ENCODE measurements at regions of chr9 and their contacts with region 1.

Region 1: DNA sequence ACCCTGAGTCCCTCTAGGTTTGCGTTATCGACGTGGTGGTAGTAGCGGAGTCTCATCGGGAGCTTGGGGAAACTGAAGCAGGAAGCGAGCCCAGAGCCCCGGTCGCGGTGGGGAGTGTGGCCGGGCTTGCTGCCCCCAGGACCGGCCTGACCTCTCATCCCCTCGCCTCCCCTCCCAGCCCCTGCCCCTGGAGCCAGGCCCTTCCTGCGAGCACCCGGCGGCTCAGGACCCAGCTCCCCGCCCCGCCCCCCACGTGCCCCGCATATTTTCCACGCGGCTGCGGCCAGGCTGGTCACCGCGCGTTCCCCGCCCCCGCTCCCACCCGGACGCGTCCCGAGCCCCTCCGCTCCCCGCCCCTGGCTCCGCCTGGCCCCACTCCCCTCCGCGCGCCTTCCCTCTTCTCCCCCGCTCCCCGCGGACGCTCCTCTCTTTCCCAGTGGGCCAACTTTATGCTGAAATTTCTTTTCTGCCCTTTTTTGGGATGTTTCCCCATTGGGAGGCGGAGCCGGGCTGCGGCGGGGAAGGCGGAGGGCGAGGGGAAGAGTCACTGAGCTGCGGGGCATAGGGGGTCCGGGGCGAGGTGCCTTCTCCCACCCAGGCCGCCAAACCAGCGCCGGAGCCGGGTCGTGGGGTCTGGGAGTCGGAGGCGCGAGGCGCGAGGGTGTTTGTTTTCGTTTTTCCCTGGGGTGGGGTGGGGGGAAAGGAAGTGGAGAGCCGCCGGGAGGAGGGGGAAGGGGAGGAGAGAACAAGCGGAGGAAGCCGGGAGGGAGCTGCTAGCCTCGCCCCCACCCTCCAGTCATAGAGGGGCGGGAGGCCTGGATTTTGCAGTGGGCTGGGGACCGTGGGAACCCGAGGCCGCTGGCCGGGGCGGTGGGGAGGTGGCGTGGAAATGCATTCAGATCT is 957 bp upstream of the TPM2 start:
- DNase-seq: peak; percentile 56
- H3K4me3 Mint-ChIP-seq: peak overlapping the region; percentile 75
- H3K27ac Mint-ChIP-seq: no peak overlapping the region
- H3K4me1 Mint-ChIP-seq: peaks cover 21% of the 10 kb centered on the region
- H3K27me3 Mint-ChIP-seq: no peaks in the 10 kb centered on the region

Region 2: DNA sequence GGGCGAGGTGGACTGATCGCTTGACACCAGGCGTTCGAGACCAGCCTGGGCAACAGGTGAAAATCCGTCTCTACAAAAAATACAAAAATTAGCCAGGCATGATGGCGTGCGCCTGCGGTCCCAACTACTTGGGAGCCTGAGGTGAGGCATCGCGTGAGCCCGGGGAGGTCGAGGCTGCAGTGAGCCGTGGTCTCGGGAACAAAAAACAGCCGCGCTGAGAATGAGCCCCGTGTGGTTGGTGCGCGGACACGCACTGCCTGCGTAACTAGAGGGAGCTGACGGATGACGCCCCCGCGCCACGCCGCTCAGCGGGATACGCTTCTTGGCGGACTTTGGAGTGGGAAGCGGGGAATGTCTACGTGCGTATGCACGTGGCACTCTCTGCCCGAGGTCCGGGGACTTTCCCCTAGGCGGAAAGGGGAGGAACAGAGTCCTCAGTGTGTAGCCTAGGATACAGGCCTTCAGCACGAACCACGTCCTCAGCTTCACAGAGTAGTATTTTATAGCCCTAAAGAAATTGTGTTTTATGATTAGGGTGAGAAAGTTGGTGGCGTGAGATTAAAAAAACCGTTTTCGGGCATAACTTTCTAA is 33.0 kb before region 1 on chr9 and contains the start of gene RMRP:
- CTCF ChIA-PET with region 1: interaction called, 28 read pairs
- POLR2A ChIA-PET with region 1: interaction called, 8 read pairs
- intact Hi-C with region 1: loop called (anchors 5 kb)
- DNase-seq: peak; percentile 96
- H3K4me3 Mint-ChIP-seq: peak within 1 kb of the TSS; percentile 86
- H3K27ac Mint-ChIP-seq: peak within 1 kb of the TSS; percentile 96
- H3K4me1 Mint-ChIP-seq: peaks cover 64% of the 10 kb centered on the region
- H3K27me3 Mint-ChIP-seq: peaks cover 2% of the 10 kb centered on the region
- total RNA-seq, gene RMRP: 10,694 to 13,592 TPM

Region 3: GRCh38 chr9:35664531-35665470 is 25.9 kb before region 1 on chr9 and contains the start of gene ARHGEF39:
- CTCF ChIA-PET with region 1: interaction called, 37 read pairs
- POLR2A ChIA-PET with region 1: no interaction called
- intact Hi-C with region 1: loop called (anchors 2 kb)
- DNase-seq: peak; percentile 89
- H3K4me3 Mint-ChIP-seq: peak within 1 kb of the TSS; percentile 84
- H3K27ac Mint-ChIP-seq: peak within 1 kb of the TSS; percentile 73
- H3K4me1 Mint-ChIP-seq: peaks cover 53% of the 10 kb centered on the region
- H3K27me3 Mint-ChIP-seq: no peaks in the 10 kb centered on the region
- total RNA-seq, gene ARHGEF39: 28.1 to 28.2 TPM

Region 4: DNA sequence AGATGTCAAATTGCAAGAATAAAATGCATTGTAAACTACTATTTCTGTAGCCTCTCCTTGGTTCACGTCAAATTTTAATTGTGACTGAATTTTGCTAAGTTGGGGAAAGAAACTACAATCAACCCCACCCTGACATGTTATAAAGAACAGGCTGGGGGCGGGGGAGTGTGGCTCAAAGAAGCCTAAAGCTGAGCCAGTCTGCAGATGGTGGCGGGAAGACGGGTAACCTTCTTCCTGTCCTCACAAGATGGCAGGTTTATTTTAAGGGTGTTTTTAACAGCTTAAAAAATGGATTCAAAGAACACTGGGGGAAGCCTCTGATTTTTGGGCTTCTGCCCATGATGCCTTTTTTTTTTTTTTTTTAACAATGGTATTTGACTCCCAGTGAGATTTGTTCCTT is 813.5 kb after region 1 on chr9:
- CTCF ChIA-PET with region 1: no interaction called
- POLR2A ChIA-PET with region 1: no interaction called
- intact Hi-C with region 1: loop called (anchors 5 kb)
- DNase-seq: peak; percentile 12
- H3K4me3 Mint-ChIP-seq: no peak overlapping the region
- H3K27ac Mint-ChIP-seq: no peak overlapping the region
- H3K4me1 Mint-ChIP-seq: peaks cover 15% of the 10 kb centered on the region
- H3K27me3 Mint-ChIP-seq: no peaks in the 10 kb centered on the region